Endothelial cell of umbilical vein (primary cell): ENCODE measurements at regions of chr4 and their contacts with region 1.

Region 1: GRCh38 chr4:145618932-145619638 is at the start of gene MMAA:
- DNase-seq: peak; percentile 89
- H3K4me3 ChIP-seq: peak within 1 kb of the TSS; percentile 87 to 98 (median 91)
- H3K27ac ChIP-seq: peak within 1 kb of the TSS; percentile 98
- H3K4me1 ChIP-seq: peaks cover 21% of the 10 kb centered on the region
- H3K27me3 ChIP-seq: no peaks in the 10 kb centered on the region
- CTCF ChIP-seq: peak; percentile 65 to 72
- POLR2A ChIP-seq: peak; percentile 85
- total RNA-seq, gene MMAA: 5.1 and 5.6 TPM in 2 replicates

Region 2: DNA sequence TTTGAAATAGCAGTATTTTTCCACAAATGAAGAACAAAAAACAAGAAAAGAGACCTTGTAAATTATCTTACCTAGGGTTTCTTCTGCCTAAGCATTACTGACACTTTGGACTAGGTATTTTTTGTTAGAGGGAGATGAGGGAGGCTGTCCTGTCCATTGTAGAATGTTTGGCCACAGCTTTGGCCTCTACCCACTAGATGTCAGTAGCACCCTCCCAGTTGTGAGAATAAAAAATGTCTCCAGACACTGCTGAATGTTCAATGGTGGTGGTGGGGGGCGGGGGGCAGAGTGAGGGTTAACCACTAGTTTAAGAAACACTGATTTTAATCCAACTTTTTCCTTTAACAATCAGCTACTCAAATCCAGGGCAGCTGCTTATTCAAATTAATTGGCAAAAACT is 464.5 kb before region 1 on chr4:
- CTCF ChIA-PET with region 1: interaction called, 31 read pairs
- POLR2A ChIA-PET with region 1: no interaction called
- dilution Hi-C with region 1: no loop called
- intact Hi-C with region 1: loop called (anchors 1 kb)
- DNase-seq: peak; percentile 73
- H3K4me3 ChIP-seq: no peak overlapping the region
- H3K27ac ChIP-seq: peak overlapping the region; percentile 46
- H3K4me1 ChIP-seq: peaks cover 28% of the 10 kb centered on the region
- H3K27me3 ChIP-seq: no peaks in the 10 kb centered on the region
- CTCF ChIP-seq: peak; percentile 53 to 66
- POLR2A ChIP-seq: no peak

Region 3: DNA sequence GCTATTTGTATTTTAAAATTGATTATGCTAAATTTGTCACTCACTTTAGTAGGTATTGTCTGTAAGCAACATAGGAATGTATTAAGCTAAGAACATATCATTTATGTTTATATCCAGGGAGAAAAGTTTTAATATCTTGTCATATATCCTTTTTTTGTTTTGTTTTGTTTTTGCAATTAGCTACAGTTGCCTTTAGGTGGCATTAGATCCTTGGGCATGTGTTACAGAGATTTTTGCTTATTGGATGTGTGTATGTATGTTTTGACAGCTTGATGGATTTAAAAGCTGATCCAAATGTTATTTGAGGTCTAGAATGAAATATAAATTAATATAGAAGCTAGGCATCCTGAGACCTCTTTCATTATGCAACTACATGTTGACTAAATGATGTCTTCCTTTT is 402.6 kb before region 1 on chr4:
- CTCF ChIA-PET with region 1: interaction called, 197 read pairs
- POLR2A ChIA-PET with region 1: no interaction called
- dilution Hi-C with region 1: no loop called
- intact Hi-C with region 1: loop called (anchors 1 kb)
- DNase-seq: peak; percentile 64
- H3K4me3 ChIP-seq: no peak overlapping the region
- H3K27ac ChIP-seq: no peak overlapping the region
- H3K4me1 ChIP-seq: peaks cover 4% of the 10 kb centered on the region
- H3K27me3 ChIP-seq: peaks cover 4 to 5% of the 10 kb centered on the region in 2 experiments
- CTCF ChIP-seq: peak; percentile 28 to 34
- POLR2A ChIP-seq: no peak

Region 4: GRCh38 chr4:145545538-145546174 is 73.4 kb before region 1 on chr4:
- CTCF ChIA-PET with region 1: interaction called, 11 read pairs
- POLR2A ChIA-PET with region 1: no interaction called
- dilution Hi-C with region 1: no loop called
- intact Hi-C with region 1: no loop called
- DNase-seq: peak; percentile 100
- H3K4me3 ChIP-seq: peak overlapping the region in 1 of 3 experiments; percentile 58
- H3K27ac ChIP-seq: peak overlapping the region; percentile 98
- H3K4me1 ChIP-seq: peaks cover 43% of the 10 kb centered on the region
- H3K27me3 ChIP-seq: no peaks in the 10 kb centered on the region
- CTCF ChIP-seq: no peak
- POLR2A ChIP-seq: peak; percentile 73

Region 5: GRCh38 chr4:145788755-145789154 is 169.7 kb after region 1 on chr4:
- CTCF ChIA-PET with region 1: no interaction called
- POLR2A ChIA-PET with region 1: no interaction called
- dilution Hi-C with region 1: no loop called
- intact Hi-C with region 1: no loop called
- DNase-seq: no peak
- H3K4me3 ChIP-seq: no peak overlapping the region
- H3K27ac ChIP-seq: no peak overlapping the region
- H3K4me1 ChIP-seq: peaks cover 2% of the 10 kb centered on the region
- H3K27me3 ChIP-seq: no peaks in the 10 kb centered on the region
- CTCF ChIP-seq: no peak
- POLR2A ChIP-seq: no peak

Region 6: GRCh38 chr4:145808021-145808650 is 189.1 kb after region 1 on chr4:
- CTCF ChIA-PET with region 1: interaction called, 5 read pairs
- POLR2A ChIA-PET with region 1: no interaction called
- dilution Hi-C with region 1: no loop called
- intact Hi-C with region 1: loop called (anchors 1 kb)
- DNase-seq: peak; percentile 93
- H3K4me3 ChIP-seq: no peak overlapping the region
- H3K27ac ChIP-seq: peak overlapping the region; percentile 82
- H3K4me1 ChIP-seq: peaks cover 44% of the 10 kb centered on the region
- H3K27me3 ChIP-seq: no peaks in the 10 kb centered on the region
- CTCF ChIP-seq: no peak
- POLR2A ChIP-seq: no peak

Region 7: DNA sequence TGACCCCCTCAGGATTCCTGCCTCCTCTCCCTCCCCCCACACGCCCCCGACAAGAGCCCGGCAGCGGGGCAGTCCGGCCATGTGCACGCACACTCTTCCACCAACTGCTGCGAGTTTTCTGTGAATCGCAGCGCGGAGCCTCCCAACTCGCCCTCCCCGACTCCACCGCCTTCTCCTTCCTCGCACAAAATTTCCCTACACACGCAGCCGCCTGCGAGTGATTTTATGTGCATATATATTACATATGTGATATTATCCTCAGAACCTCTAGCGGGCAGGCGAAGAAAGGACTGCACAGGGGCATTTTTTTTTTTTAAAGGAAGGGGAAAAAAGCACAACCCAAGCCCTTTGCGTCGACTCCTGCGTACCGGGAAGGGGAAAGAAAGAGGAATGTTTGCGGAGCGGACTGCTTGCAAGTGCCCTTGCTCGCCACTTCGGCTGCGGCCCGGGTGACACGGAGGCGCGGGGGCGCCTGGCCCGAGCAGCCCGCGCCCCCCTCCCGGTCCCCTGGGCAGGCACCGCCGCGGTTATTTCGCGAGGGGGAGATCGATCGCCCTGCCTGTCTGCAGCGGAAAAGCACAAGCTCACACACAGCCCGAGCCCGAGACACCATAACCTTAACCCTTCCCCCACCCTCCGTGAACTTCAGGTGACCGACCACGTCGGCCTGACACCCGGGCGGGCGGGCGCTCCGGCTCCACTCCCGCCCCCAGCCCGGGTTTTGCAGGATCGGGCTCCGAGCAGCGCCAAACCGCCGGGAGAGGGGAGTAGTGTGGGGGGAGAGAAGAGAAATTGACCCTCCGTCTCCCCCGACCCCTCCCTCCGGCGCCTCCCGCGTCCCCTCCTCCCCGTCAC is 317.3 kb after region 1 on chr4:
- CTCF ChIA-PET with region 1: no interaction called
- POLR2A ChIA-PET with region 1: no interaction called
- dilution Hi-C with region 1: no loop called
- intact Hi-C with region 1: loop called (anchors 1 kb)
- DNase-seq: peak; percentile 79
- H3K4me3 ChIP-seq: peak overlapping the region; percentile 62 to 96 (median 81)
- H3K27ac ChIP-seq: peak overlapping the region; percentile 71
- H3K4me1 ChIP-seq: peaks cover 22% of the 10 kb centered on the region
- H3K27me3 ChIP-seq: no peaks in the 10 kb centered on the region
- CTCF ChIP-seq: peak in 1 of 2 donors; percentile 28
- POLR2A ChIP-seq: no peak